Right ventricle myocardium inferior (tissue), 1 donor: ENCODE measurements at regions of chr2 and their contacts with region 1.

Region 1: DNA sequence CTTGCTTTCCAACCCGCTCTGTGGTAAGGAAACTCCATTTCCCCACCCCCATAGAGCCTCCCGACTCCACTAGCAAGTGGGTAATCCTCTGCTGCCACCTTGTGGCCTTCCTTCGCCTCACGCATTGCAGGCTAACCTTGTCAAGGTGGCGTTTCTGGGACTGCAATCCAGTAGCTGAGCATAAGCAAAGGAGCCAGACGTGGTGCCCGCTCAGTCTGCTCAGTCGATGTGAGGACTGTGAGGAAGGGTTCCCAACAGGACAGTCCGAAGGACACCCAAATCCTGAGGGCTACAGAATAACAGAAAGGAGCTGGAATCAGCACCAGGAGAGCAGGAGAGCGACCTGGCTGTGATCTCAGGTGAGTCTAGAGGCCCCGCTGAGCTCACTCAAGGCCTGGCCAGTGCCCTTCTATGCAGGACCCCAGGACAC is 144.2 kb downstream of the SUCLG1 start:
- DNase-seq: peak; percentile 74
- ATAC-seq: peak; percentile 76

Region 2: DNA sequence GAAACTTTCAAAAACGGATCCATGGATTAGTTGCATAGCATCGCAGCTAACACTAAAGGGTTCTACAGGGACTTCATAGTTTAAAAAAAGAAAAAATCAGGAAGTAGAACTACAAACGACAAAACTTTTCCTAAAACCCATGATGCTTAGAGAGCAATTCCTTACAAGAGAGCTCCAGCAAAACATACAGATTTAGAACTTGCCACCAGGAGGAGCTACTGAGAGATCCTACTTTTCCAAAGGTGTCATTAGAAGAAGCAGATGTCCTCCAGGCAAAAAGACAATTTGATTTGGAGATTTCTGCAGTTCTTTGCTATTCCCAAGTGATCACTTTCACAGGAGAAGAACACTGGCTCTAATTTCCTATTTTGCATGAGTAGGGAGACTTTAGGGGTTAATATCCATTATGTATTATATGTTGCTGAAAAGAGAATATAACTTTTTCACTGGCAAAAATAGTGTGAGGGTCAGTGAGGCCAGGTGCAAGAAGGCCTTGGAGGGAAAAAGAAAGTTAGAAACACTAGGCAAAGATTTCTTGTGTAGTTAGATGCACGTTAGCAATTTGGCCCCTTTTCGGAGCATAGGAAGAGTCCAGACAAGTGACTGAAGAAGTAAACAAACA is 292.0 kb before region 1 on chr2:
- intact Hi-C with region 1: loop called (anchors 5 kb)
- DNase-seq: no peak
- ATAC-seq: no peak